Activated naive CD8-positive, alpha-beta T cell treated with anti-CD3 and anti-CD28 coated beads, Interleukin-2, amount 10 ng/mL, durations not matched to agents 7 days and 5 days (primary cell): ENCODE measurements at regions of chr12 and their contacts with region 1.

Region 1: DNA sequence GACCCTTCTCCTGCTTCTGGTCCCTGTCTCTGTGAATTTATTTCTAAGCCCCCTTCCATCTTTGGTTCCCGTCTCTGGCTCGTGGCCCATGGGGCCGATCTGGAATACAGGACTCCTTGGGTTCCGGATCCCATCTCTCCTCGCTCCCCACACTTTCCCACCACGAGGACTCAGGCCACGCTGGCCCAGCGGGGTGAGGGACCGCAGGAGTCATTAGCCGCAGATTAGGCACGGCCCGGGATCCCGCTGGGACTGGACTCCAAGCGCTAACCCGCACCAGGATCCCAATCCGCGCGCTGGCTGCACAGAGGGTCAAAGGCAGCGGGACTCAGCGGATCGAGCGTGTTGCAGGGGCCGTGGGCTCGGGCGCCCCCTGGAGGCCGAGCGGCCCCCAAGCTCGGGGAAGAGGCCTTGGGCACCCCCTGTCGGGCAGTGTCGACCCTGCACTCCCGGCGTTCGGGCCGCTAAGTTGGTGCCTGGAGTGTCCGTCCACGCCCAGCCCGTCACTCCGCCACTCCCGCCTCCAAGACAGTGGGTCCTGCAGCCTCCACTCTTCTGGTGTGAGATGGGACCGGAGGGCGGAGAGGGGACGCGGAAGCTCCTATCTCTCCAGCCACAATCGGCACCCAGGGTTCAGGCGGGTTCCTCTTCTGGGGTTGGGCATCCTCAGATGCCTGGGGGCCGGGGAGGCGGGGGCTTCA is 9.5 kb downstream of the SHMT2 start:
- DNase-seq: peak; percentile 96
- ATAC-seq: peak; percentile 62
- H3K4me3 Mint-ChIP-seq: peak overlapping the region; percentile 98
- H3K27ac Mint-ChIP-seq: peak overlapping the region; percentile 90
- H3K4me1 Mint-ChIP-seq: peaks cover 53% of the 10 kb centered on the region
- H3K27me3 Mint-ChIP-seq: peaks cover 42% of the 10 kb centered on the region

Region 2: GRCh38 chr12:57213058-57213715 is 25.8 kb before region 1 on chr12:
- POLR2A ChIA-PET with region 1: interaction called, 57 read pairs
- DNase-seq: peak; percentile 86
- ATAC-seq: peak; percentile 36
- H3K4me3 Mint-ChIP-seq: no peak overlapping the region
- H3K27ac Mint-ChIP-seq: no peak overlapping the region
- H3K4me1 Mint-ChIP-seq: peaks cover 30% of the 10 kb centered on the region
- H3K27me3 Mint-ChIP-seq: peaks cover 42% of the 10 kb centered on the region